ENCODE measurements at regions of chr11 and their contacts with region 1.

Region 1: GRCh38 chr11:20127671-20128527 is 32.4 kb downstream of the DBX1 start:
- DNase-seq: peak; percentile 90
- ATAC-seq: peak; percentile 70
- H3K4me3 Mint-ChIP-seq: no peak overlapping the region
- H3K27ac Mint-ChIP-seq: no peak overlapping the region
- H3K4me1 Mint-ChIP-seq: peaks cover 10% of the 10 kb centered on the region
- H3K27me3 Mint-ChIP-seq: peaks cover 25% of the 10 kb centered on the region
- CTCF ChIP-seq: peak; percentile 86

Region 2: DNA sequence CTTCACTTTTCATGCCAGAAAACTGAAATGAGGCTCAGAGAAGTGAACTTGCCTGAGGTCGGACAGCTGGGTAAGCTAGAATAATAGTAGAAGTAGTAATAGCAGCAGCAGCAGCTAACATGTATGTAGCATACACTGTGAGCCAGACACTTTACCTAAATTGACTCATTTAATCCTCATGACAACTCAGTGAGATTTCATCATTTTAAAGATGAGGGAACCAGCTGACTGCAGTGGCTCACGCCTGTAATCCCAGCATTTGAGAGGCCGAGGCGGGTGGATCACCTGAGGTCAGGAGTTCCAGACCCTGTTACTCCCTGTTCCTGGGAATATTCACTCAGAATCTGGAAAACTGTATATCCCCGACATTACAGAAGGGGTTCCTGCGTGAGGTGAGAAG is 122.2 kb before region 1 on chr11:
- CTCF ChIA-PET with region 1: no interaction called
- POLR2A ChIA-PET with region 1: no interaction called
- DNase-seq: no peak
- ATAC-seq: no peak
- H3K4me3 Mint-ChIP-seq: no peak overlapping the region
- H3K27ac Mint-ChIP-seq: no peak overlapping the region
- H3K4me1 Mint-ChIP-seq: peaks cover 35% of the 10 kb centered on the region
- H3K27me3 Mint-ChIP-seq: peaks cover 31% of the 10 kb centered on the region
- CTCF ChIP-seq: no peak

Region 3: GRCh38 chr11:20117291-20117690 is 10.6 kb before region 1 on chr11:
- CTCF ChIA-PET with region 1: interaction called, 11 read pairs
- POLR2A ChIA-PET with region 1: no interaction called
- DNase-seq: no peak
- ATAC-seq: no peak
- H3K4me3 Mint-ChIP-seq: no peak overlapping the region
- H3K27ac Mint-ChIP-seq: no peak overlapping the region
- H3K4me1 Mint-ChIP-seq: no peaks in the 10 kb centered on the region
- H3K27me3 Mint-ChIP-seq: no peaks in the 10 kb centered on the region
- CTCF ChIP-seq: no peak

Region 4: DNA sequence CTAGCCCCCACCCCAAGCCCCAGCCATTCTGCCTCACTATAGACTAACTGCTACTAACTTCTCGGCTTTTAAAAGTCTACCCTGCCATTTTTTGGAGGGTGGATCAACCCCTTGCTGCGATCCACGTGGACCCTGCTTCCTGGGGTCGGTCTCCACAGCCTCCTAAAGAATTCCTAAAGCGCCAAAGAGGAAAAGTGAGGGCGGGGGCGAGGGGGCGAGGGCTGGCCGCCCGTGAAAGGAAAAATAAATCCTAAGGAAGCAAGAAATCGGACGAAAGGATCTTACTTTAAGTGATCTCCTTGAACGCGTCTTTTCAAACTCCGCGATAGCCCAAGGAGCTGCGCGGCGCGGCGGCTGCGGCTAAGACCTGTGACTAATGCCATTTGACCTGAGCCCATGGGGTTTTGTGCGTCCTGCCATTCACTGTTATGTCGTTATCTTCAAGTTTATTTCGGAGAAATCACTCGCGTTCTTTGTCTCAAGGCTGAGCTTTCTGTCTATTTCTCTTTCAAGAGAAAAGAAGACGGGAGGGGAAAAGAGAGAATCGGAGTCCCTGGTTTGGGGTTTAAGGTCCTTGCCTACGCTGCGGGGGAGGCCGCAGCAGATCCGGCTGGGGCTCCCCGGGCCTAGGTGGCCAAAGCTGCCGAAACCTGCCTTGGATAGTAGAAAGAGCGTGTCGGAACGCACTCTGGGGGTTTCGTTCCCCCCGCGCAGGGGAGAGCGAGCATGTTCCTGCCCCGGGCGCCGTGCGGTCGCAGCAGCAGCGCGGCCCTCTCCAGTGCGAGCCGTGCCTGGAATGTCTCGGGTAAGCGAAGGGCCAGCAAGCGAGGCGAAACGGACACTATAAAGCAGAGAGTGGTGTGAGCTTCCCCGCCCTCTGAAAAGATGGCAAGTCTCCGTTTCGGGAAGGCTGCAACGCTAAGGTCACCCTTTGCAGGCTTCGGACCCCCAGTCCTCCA is 35.2 kb after region 1 on chr11:
- CTCF ChIA-PET with region 1: interaction called, 48 read pairs
- POLR2A ChIA-PET with region 1: no interaction called
- DNase-seq: peak; percentile 69
- ATAC-seq: peak; percentile 34
- H3K4me3 Mint-ChIP-seq: peak overlapping the region; percentile 74
- H3K27ac Mint-ChIP-seq: no peak overlapping the region
- H3K4me1 Mint-ChIP-seq: peaks cover 68% of the 10 kb centered on the region
- H3K27me3 Mint-ChIP-seq: peaks cover 100% of the 10 kb centered on the region
- CTCF ChIP-seq: no peak

Region 5: DNA sequence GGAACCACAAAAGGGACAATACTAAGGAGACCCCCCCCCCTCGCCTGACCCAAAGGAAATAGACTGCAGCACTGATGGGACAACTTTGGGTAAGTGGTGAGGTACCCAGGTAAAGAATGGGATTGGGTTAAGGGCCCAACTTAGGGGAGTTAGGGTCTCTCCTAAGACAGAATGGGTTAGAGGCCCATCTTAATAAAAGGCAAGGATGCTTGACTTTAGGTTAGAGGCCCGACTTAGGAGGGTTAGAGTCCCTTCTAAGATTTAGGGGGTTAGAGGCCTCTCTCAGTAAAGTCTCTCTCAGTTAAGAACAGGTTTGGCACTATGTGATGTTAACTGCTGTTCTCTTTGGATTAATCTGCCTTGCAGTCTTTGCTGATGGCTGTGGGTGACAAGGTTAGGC is 73.3 kb after region 1 on chr11:
- CTCF ChIA-PET with region 1: no interaction called
- POLR2A ChIA-PET with region 1: no interaction called
- DNase-seq: no peak
- ATAC-seq: no peak; the same call in 1 of the 2 replicates
- H3K4me3 Mint-ChIP-seq: no peak overlapping the region
- H3K27ac Mint-ChIP-seq: no peak overlapping the region
- H3K4me1 Mint-ChIP-seq: peaks cover 7% of the 10 kb centered on the region
- H3K27me3 Mint-ChIP-seq: peaks cover 100% of the 10 kb centered on the region
- CTCF ChIP-seq: no peak

Region 6: DNA sequence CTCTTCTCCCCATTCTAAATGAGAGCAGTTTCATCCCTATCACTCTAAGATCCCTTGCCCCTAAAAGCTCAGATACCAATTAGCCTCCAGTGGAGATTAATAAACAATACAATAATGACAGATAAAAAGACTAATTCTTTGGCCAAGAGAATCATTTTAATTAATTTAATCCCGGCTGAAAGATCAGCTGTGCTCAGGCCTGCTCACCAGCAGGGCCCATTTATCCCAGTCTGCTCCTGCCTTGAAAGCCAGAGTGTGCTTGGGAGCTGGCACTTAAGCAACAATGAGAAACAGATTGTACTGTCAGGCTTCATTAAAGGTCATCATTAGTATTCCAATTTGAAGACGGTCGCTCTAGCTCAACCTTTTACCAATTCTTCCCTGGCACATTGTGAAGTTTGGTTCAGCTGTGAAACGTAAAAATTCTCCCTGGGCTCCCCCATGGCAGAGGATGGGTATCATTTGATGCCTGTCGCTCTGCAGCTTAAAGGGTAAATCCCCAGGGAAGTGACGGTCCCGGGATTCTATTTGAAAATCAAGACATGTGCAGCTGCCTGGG is 199.6 kb after region 1 on chr11:
- CTCF ChIA-PET with region 1: interaction called, 15 read pairs
- POLR2A ChIA-PET with region 1: no interaction called
- DNase-seq: no peak
- ATAC-seq: no peak
- H3K4me3 Mint-ChIP-seq: no peak overlapping the region
- H3K27ac Mint-ChIP-seq: no peak overlapping the region
- H3K4me1 Mint-ChIP-seq: no peaks in the 10 kb centered on the region
- H3K27me3 Mint-ChIP-seq: no peaks in the 10 kb centered on the region; the same call in 1 of the 2 replicates
- CTCF ChIP-seq: no peak

Region 7: GRCh38 chr11:20355221-20356219 is 227.6 kb after region 1 on chr11:
- CTCF ChIA-PET with region 1: interaction called, 130 read pairs
- POLR2A ChIA-PET with region 1: no interaction called
- DNase-seq: peak; percentile 46
- ATAC-seq: peak; percentile 87
- H3K4me3 Mint-ChIP-seq: no peak overlapping the region
- H3K27ac Mint-ChIP-seq: no peak overlapping the region
- H3K4me1 Mint-ChIP-seq: 0 out of 2 replicates have a peak, but pooled peaks cover 4% of the 10 kb centered on the region
- H3K27me3 Mint-ChIP-seq: peaks cover 29% of the 10 kb centered on the region
- CTCF ChIP-seq: peak; percentile 40; the same call in 1 of the 2 replicates

Measured in WTC11 (cell line).